Aorta (tissue), 5 donors: ENCODE measurements at regions of chr7 and their contacts with region 1.

Region 1: DNA sequence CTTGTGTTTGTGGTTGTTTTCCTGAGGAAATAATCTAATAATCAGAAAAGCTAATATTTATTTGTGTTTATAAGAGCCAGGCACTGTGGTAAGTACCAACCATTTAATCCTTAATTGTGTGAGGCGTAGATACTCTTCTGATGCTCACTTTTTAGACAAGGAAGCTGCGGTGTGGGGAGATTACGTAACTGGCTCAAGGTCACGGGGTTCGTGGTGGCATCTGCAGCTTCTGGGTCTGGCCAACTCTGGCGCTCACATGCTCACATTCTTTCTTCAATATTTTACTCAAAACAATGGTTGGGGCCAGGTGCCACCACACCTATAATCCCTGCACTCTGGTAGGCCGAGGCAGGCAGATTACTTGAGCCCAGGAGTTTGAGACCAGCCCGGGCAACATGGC is 77.6 kb downstream of the RALA start:
- DNase-seq: peak in 1 of 2 donors; percentile 82
- ATAC-seq: no peak
- H3K4me3 ChIP-seq: no peak overlapping the region
- H3K27ac ChIP-seq: no peak overlapping the region
- H3K4me1 ChIP-seq: no peaks in the 10 kb centered on the region
- H3K27me3 ChIP-seq: no peaks in the 10 kb centered on the region

Region 2: DNA sequence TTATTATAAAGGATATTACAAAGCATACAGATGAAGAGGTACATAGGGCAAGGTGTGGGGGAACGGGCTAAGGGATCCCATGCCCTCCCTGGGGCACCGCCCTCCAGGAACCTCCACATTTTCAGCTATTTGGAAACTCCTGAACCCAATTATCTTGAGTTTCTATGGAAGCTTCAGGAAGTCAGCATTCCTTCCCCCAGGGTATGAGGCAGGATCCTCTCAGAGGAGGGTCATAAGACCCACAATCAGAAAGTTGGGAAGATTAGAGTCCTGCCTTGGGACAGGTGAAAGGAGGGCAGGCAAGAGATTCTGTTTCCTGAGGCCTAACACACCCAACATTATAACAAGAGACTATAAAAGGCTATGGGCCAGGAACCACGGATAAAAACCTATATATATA is 20.4 kb after region 1 on chr7:
- intact Hi-C with region 1: loop called in 1 of 2 experiments (anchors 1 kb)
- DNase-seq: no peak
- ATAC-seq: no peak
- H3K4me3 ChIP-seq: no peak overlapping the region
- H3K27ac ChIP-seq: no peak overlapping the region
- H3K4me1 ChIP-seq: no peaks in the 10 kb centered on the region
- H3K27me3 ChIP-seq: no peaks in the 10 kb centered on the region